PC-9 (cell line): ENCODE measurements at regions of chr5 and their contacts with region 1.

Region 1: DNA sequence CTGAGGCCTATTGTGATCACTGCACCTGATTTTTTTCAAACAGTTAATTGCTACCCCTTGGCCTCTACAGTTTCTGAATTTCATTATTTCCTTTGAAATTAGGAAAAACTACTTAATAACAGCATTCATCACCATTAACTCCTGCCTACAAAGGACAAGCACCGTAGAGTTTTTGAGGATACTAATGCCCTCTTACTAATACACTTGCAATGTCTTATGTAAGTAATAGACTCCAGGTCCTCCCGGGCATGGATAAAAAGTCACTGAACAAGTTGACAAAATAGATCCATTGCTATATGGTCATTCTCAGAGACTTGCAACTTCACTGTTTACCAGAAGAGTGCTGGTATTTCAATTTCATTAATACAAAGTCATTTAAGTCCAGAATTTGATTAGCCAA is 1172.5 kb downstream of the CDH12 start:
- DNase-seq: peak in 1 of 2 experiments; percentile 43
- H3K4me3 ChIP-seq: no peak overlapping the region
- H3K27ac ChIP-seq: peak overlapping the region; percentile 45; the same call in 1 of the 2 replicates
- H3K4me1 ChIP-seq: peaks cover 11% of the 10 kb centered on the region; the same call in 1 of the 2 replicates
- H3K27me3 ChIP-seq: no peaks in the 10 kb centered on the region
- CTCF ChIP-seq: no peak

Region 2: GRCh38 chr5:20590356-20590755 is 1090.3 kb before region 1 on chr5:
- CTCF ChIA-PET with region 1: no interaction called
- POLR2A ChIA-PET with region 1: no interaction called
- intact Hi-C with region 1: no loop called
- DNase-seq: no peak
- H3K4me3 ChIP-seq: no peak overlapping the region
- H3K27ac ChIP-seq: no peak overlapping the region
- H3K4me1 ChIP-seq: no peaks in the 10 kb centered on the region
- H3K27me3 ChIP-seq: no peaks in the 10 kb centered on the region
- CTCF ChIP-seq: no peak

Region 3: GRCh38 chr5:21397693-21398092 is 283.0 kb before region 1 on chr5:
- CTCF ChIA-PET with region 1: no interaction called
- POLR2A ChIA-PET with region 1: no interaction called
- intact Hi-C with region 1: no loop called
- DNase-seq: no peak
- H3K4me3 ChIP-seq: no peak overlapping the region
- H3K27ac ChIP-seq: no peak overlapping the region
- H3K4me1 ChIP-seq: no peaks in the 10 kb centered on the region
- H3K27me3 ChIP-seq: no peaks in the 10 kb centered on the region
- CTCF ChIP-seq: no peak

Region 4: GRCh38 chr5:21711866-21712758 is 31.5 kb after region 1 on chr5:
- CTCF ChIA-PET with region 1: interaction called, 10 read pairs
- POLR2A ChIA-PET with region 1: no interaction called
- intact Hi-C with region 1: no loop called
- DNase-seq: no peak
- H3K4me3 ChIP-seq: no peak overlapping the region
- H3K27ac ChIP-seq: no peak overlapping the region
- H3K4me1 ChIP-seq: no peaks in the 10 kb centered on the region
- H3K27me3 ChIP-seq: no peaks in the 10 kb centered on the region
- CTCF ChIP-seq: no peak